ENCODE measurements at regions of chr5 and their contacts with region 1.

Region 1: GRCh38 chr5:149667084-149667828 is 62.9 kb upstream of the PPARGC1B start:
- DNase-seq: peak; percentile 49
- H3K4me3 Mint-ChIP-seq: no peak overlapping the region
- H3K27ac Mint-ChIP-seq: no peak overlapping the region
- H3K4me1 Mint-ChIP-seq: no peaks in the 10 kb centered on the region
- H3K27me3 Mint-ChIP-seq: no peaks in the 10 kb centered on the region

Region 2: GRCh38 chr5:148713735-148714508 is 953.3 kb before region 1 on chr5:
- CTCF ChIA-PET with region 1: no interaction called
- intact Hi-C with region 1: no loop called
- DNase-seq: no peak
- H3K4me3 Mint-ChIP-seq: no peak overlapping the region
- H3K27ac Mint-ChIP-seq: no peak overlapping the region
- H3K4me1 Mint-ChIP-seq: peaks cover 5% of the 10 kb centered on the region
- H3K27me3 Mint-ChIP-seq: peaks cover 41% of the 10 kb centered on the region

Region 3: DNA sequence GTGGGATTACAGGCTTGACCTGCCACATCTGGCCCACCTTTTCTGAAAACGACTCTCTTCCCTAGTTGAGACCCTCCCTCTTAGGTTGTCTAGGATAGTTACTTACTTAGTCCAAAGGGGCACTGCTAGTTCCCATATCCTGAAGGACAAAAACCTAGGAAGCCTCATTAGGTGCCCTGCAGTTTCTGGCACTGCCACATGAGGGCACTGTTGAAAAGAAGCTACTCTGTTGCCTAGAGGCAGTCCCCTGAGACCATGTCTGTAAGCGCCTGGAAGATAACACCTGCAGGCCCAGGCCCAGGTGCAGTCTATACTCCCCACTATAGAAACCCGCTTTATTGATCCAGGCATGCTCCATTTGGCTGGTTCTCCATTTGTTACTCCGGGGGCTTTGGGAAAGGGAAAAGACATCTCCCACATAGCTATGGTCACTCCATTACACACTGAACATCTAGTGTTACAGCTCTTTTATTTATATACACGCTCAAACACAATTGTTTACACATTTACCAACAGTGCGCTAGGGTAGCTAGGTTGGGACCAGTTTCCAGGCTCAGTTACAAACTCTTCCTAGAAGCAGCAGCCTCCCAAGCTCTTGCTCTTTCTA is 10.6 kb before region 1 on chr5:
- CTCF ChIA-PET with region 1: interaction called, 18 read pairs
- intact Hi-C with region 1: no loop called
- DNase-seq: peak; percentile 67
- H3K4me3 Mint-ChIP-seq: no peak overlapping the region
- H3K27ac Mint-ChIP-seq: no peak overlapping the region
- H3K4me1 Mint-ChIP-seq: no peaks in the 10 kb centered on the region
- H3K27me3 Mint-ChIP-seq: peaks cover 5% of the 10 kb centered on the region

Region 4: DNA sequence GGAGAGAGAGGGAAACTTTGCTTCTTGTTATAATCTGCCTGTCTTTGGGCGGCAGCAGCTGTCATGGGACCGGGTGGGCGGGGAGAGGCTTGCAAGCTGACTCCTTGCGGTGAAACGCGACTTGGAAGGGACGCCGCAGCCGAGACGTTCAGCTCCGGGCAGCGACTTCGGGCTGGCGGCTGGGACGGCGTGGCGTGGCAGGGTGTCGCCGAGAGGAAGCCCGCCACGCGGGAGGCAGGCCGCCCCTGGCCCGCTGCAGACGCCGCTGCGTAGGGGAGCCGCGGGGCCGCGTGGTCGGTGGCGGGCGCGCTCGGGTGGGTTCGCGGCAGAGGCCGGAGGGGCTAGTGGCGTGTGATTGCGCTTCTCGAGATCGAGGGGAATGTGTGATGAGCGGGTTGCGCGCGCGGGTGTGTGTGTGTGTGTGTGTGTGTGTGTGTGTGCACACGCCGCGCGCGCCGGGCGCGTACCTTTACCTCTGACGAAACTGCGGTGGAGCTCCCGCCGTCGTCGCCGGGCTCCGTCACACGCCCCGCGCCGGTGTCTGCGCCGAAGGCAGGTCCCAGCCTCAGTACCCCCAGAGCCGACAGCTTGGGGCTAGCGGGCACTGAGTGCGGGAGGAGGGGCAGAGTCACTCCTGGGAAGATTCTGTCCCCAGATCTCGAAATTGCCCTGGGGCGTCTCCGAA is 64.5 kb after region 1 on chr5:
- CTCF ChIA-PET with region 1: no interaction called
- intact Hi-C with region 1: loop called (anchors 1 kb)
- DNase-seq: peak; percentile 90
- H3K4me3 Mint-ChIP-seq: peak overlapping the region; percentile 81
- H3K27ac Mint-ChIP-seq: peak overlapping the region; percentile 56
- H3K4me1 Mint-ChIP-seq: peaks cover 4% of the 10 kb centered on the region
- H3K27me3 Mint-ChIP-seq: no peaks in the 10 kb centered on the region

Measured in activated naive CD4-positive, alpha-beta T cell treated with anti-CD3 and anti-CD28 coated beads for 36 hours (primary cell).